WTC11 (cell line): ENCODE measurements at regions of chr5 and their contacts with region 1.

Region 1: GRCh38 chr5:127373858-127374491 is 83.4 kb downstream of the MEGF10 start:
- DNase-seq: no peak
- ATAC-seq: peak; percentile 73
- H3K4me3 Mint-ChIP-seq: no peak overlapping the region
- H3K27ac Mint-ChIP-seq: no peak overlapping the region
- H3K4me1 Mint-ChIP-seq: peaks cover 12% of the 10 kb centered on the region
- H3K27me3 Mint-ChIP-seq: no peaks in the 10 kb centered on the region
- CTCF ChIP-seq: peak; percentile 88

Region 2: DNA sequence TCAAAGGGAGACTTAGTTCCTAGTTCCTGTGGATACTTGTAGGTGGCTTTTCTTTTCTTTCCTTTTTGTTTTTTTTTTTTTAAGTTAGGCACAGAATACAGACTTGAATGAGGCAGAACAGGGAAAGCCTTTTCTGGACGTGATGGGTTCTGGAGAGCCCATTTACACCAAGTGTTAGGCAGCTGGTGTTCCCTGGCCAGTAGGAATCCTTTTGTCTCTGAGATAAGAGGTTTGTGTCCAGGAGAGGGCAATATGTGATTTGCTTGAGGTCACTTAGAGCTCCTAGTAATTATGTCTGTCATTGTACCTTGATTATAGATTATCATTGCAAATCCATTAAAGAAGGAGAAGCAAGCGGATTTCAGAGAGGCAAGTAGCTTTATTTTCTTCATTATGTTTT is 74.3 kb before region 1 on chr5:
- CTCF ChIA-PET with region 1: interaction called, 15 read pairs
- POLR2A ChIA-PET with region 1: no interaction called
- DNase-seq: no peak
- ATAC-seq: peak; percentile 64
- H3K4me3 Mint-ChIP-seq: no peak overlapping the region
- H3K27ac Mint-ChIP-seq: peak overlapping the region; percentile 46
- H3K4me1 Mint-ChIP-seq: peaks cover 50% of the 10 kb centered on the region
- H3K27me3 Mint-ChIP-seq: no peaks in the 10 kb centered on the region
- CTCF ChIP-seq: no peak

Region 3: DNA sequence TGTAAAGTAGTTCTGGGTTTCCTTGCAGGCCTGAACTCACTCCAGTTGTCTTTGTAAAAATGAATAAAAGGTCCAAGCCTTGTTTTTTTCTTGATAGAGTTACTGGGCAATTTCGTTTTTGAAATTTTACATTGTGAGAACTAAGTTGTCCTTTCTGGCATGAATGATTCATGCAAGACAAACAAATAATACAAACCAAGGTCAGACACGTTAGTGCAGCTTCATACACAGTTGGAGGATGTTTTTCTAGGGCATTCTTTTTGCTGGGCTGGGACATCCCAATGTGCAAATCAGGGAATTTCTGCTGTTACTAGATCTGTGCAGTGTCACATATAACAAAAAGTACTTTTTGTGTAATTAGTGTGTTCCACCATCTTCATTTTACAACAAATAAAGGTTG is 12.6 kb after region 1 on chr5:
- CTCF ChIA-PET with region 1: interaction called, 10 read pairs
- POLR2A ChIA-PET with region 1: no interaction called
- DNase-seq: no peak
- ATAC-seq: no peak
- H3K4me3 Mint-ChIP-seq: no peak overlapping the region
- H3K27ac Mint-ChIP-seq: 0 out of 2 replicates have a peak overlapping the region, but pooled peaks have one; percentile 50
- H3K4me1 Mint-ChIP-seq: no peaks in the 10 kb centered on the region; the same call in 1 of the 2 replicates
- H3K27me3 Mint-ChIP-seq: no peaks in the 10 kb centered on the region
- CTCF ChIP-seq: no peak

Region 4: GRCh38 chr5:127410959-127411358 is 37.0 kb after region 1 on chr5:
- CTCF ChIA-PET with region 1: no interaction called
- POLR2A ChIA-PET with region 1: no interaction called
- DNase-seq: no peak
- ATAC-seq: no peak
- H3K4me3 Mint-ChIP-seq: no peak overlapping the region
- H3K27ac Mint-ChIP-seq: no peak overlapping the region; the same call in 1 of the 2 replicates
- H3K4me1 Mint-ChIP-seq: peaks cover 30% of the 10 kb centered on the region
- H3K27me3 Mint-ChIP-seq: no peaks in the 10 kb centered on the region
- CTCF ChIP-seq: no peak